ENCODE measurements at regions of chr10 and their contacts with region 1.

Region 1: DNA sequence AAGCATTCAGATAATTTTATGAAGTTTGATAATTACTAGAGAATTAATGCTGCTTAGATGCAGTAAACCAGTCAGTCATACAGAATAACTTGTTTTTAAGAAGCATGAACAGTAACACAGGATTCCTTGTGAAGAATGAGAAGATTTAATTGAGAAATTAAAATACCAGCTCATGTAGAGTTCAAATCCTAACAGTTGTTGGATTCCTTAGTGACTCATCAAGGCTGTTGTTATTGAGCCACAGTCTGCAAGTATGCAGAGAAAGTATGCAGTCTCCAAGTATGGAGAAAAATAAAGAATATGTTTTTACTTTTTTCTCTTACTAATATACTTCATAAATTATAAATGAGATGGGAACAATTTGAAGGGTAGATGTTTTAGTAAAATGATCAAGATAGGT is 30.2 kb upstream of the CYP26C1 start:
- DNase-seq: peak; percentile 38
- H3K4me3 ChIP-seq: no peak overlapping the region
- H3K27ac ChIP-seq: peak overlapping the region; percentile 6
- H3K4me1 ChIP-seq: peaks cover 23% of the 10 kb centered on the region
- H3K27me3 ChIP-seq: no peaks in the 10 kb centered on the region
- CTCF ChIP-seq: no peak

Region 2: DNA sequence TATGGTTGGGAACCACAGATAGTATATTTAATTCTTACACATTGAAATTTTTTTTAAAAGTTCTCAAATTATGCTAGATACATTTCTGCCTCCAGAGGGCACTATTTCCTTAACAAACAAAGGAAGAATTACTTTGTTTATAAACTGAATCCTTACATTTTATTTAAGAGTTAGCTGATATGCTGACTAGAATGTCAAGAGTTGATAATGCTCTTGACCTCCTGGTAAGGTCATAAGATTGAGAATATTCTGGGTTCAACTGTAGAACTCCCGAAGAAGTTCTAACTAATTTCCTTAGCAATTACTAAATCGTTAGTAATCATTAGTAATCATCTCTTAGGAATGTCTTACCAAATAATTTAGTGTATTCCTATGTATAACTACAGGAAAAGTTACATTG is 65.1 kb before region 1 on chr10:
- CTCF ChIA-PET with region 1: no interaction called
- dilution Hi-C with region 1: no loop called
- in situ Hi-C with region 1: no loop called
- intact Hi-C with region 1: loop called (anchors 5 kb)
- DNase-seq: peak; percentile 28
- H3K4me3 ChIP-seq: peak overlapping the region in 2 of 3 experiments; percentile 9 to 36
- H3K27ac ChIP-seq: peak overlapping the region; percentile 45
- H3K4me1 ChIP-seq: peaks cover 5% of the 10 kb centered on the region
- H3K27me3 ChIP-seq: no peaks in the 10 kb centered on the region
- CTCF ChIP-seq: peak; percentile 59 to 62

Region 3: DNA sequence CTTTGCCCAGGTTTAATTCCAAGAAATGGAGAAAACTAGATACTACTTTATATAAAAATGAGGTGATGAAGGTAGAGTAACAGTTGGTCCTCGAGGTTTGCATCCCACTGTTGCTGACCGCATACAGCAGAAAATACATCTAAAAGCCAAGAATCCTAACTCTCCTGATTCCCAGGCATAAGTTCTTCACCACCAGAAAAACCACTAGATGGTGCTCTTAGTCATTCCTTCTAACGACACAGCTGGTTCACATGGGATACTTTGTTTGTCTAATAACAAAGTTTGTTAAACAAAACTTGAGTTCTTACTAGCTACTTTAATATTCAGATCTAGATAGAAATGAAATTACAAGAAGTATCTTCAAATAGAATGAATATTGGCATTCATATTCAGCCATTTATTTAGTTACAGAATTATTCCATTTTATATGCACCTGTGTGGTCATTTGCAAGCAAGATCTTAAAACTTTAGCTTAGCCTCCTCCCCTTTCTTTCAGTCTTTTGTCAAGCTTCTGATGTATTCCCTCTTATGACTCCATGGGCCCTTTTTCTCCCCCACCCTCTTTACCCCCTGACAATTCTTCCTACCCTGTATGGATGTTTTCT is 23.9 kb before region 1 on chr10:
- CTCF ChIA-PET with region 1: no interaction called
- dilution Hi-C with region 1: no loop called
- in situ Hi-C with region 1: no loop called
- intact Hi-C with region 1: no loop called
- DNase-seq: peak; percentile 35
- H3K4me3 ChIP-seq: no peak overlapping the region
- H3K27ac ChIP-seq: no peak overlapping the region
- H3K4me1 ChIP-seq: no peaks in the 10 kb centered on the region
- H3K27me3 ChIP-seq: no peaks in the 10 kb centered on the region
- CTCF ChIP-seq: peak; percentile 72 to 74

Measured in mammary epithelial cell (primary cell).